ENCODE measurements at regions of chr4 and their contacts with region 1.

Region 1: GRCh38 chr4:174009686-174010451 is 273.6 kb downstream of the FBXO8 start:
- DNase-seq: no peak
- H3K4me3 ChIP-seq: no peak overlapping the region
- H3K27ac ChIP-seq: no peak overlapping the region
- H3K4me1 ChIP-seq: no peaks in the 10 kb centered on the region
- H3K27me3 ChIP-seq: no peaks in the 10 kb centered on the region
- CTCF ChIP-seq: no peak
- POLR2A ChIP-seq: no peak

Region 2: GRCh38 chr4:173958445-173958844 is 51.4 kb before region 1 on chr4:
- intact Hi-C with region 1: loop called (anchors 2 kb)
- DNase-seq: no peak
- H3K4me3 ChIP-seq: no peak overlapping the region
- H3K27ac ChIP-seq: no peak overlapping the region
- H3K4me1 ChIP-seq: no peaks in the 10 kb centered on the region
- H3K27me3 ChIP-seq: no peaks in the 10 kb centered on the region
- CTCF ChIP-seq: no peak
- POLR2A ChIP-seq: no peak

Measured in breast epithelium (tissue), 4 donors.